Panc1 (cell line): ENCODE measurements at regions of chr12 and their contacts with region 1.

Region 1: GRCh38 chr12:30847259-30847658 is 79.3 kb upstream of the TSPAN11 start:
- DNase-seq: peak; percentile 64
- ATAC-seq: peak; percentile 74
- H3K4me3 ChIP-seq: no peak overlapping the region
- H3K27ac ChIP-seq: no peak overlapping the region
- H3K4me1 ChIP-seq: no peaks in the 10 kb centered on the region
- H3K27me3 ChIP-seq: peaks cover 12% of the 10 kb centered on the region; the same call in 1 of the 2 replicates
- CTCF ChIP-seq: peak; percentile 85

Region 2: DNA sequence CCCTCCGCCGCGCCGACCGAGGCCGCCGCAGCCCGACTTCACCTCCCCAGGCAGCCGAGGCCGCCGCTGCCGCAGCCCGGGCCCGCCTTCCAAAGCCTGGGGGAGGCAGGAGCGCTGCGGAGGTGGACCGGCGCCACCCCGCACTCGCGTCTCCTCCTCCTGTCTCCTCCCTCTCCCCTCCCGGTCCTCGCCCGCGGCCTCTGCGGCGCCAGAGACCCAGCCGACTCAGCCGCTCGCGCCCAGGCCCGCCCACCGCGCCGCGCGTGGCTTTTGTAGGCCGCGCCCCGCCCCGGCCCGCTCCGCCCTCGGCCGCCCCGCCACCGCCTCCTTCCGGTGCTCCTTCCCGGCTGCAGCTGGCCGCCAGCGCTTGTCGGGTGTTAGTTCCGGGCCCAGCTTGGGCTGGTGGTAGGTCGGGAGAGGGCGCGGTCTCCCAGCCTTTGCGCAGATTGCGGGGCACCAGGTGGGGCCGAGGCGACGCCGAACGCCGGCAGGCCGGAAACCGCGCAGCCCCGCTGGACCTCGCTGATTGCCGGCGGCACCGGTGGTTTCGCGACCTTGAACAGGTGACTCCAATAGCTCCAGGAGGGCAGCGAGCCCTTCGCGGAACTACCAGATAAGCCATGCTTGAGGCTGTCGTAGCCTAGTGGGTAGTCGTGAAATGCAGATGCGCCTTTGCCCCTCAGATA is 92.4 kb before region 1 on chr12 and contains the start of gene CAPRIN2:
- CTCF ChIA-PET with region 1: interaction called, 12 read pairs
- POLR2A ChIA-PET with region 1: no interaction called
- in situ Hi-C with region 1: no loop called
- intact Hi-C with region 1: no loop called
- DNase-seq: peak; percentile 83
- ATAC-seq: peak; percentile 98
- H3K4me3 ChIP-seq: peak within 1 kb of the TSS; percentile 88 to 93
- H3K27ac ChIP-seq: peak within 1 kb of the TSS; percentile 98
- H3K4me1 ChIP-seq: peaks cover 35% of the 10 kb centered on the region
- H3K27me3 ChIP-seq: no peaks in the 10 kb centered on the region
- CTCF ChIP-seq: peak; percentile 83
- total RNA-seq, gene CAPRIN2: 28.6 TPM

Region 3: GRCh38 chr12:30985814-30986452 is 138.7 kb after region 1 on chr12:
- CTCF ChIA-PET with region 1: interaction called, 14 read pairs
- POLR2A ChIA-PET with region 1: no interaction called
- in situ Hi-C with region 1: no loop called
- intact Hi-C with region 1: loop called (anchors 1 kb)
- DNase-seq: peak; percentile 30
- ATAC-seq: peak; percentile 90
- H3K4me3 ChIP-seq: no peak overlapping the region
- H3K27ac ChIP-seq: no peak overlapping the region
- H3K4me1 ChIP-seq: no peaks in the 10 kb centered on the region
- H3K27me3 ChIP-seq: no peaks in the 10 kb centered on the region
- CTCF ChIP-seq: peak; percentile 94

Region 4: GRCh38 chr12:31117203-31118011 is 270.1 kb after region 1 on chr12:
- CTCF ChIA-PET with region 1: interaction called, 14 read pairs
- POLR2A ChIA-PET with region 1: no interaction called
- in situ Hi-C with region 1: no loop called
- intact Hi-C with region 1: no loop called
- DNase-seq: peak; percentile 20
- ATAC-seq: peak; percentile 82
- H3K4me3 ChIP-seq: peak overlapping the region; percentile 46 to 74
- H3K27ac ChIP-seq: no peak overlapping the region
- H3K4me1 ChIP-seq: peaks cover 27% of the 10 kb centered on the region
- H3K27me3 ChIP-seq: no peaks in the 10 kb centered on the region; the same call in 1 of the 2 replicates
- CTCF ChIP-seq: peak; percentile 94

Region 5: DNA sequence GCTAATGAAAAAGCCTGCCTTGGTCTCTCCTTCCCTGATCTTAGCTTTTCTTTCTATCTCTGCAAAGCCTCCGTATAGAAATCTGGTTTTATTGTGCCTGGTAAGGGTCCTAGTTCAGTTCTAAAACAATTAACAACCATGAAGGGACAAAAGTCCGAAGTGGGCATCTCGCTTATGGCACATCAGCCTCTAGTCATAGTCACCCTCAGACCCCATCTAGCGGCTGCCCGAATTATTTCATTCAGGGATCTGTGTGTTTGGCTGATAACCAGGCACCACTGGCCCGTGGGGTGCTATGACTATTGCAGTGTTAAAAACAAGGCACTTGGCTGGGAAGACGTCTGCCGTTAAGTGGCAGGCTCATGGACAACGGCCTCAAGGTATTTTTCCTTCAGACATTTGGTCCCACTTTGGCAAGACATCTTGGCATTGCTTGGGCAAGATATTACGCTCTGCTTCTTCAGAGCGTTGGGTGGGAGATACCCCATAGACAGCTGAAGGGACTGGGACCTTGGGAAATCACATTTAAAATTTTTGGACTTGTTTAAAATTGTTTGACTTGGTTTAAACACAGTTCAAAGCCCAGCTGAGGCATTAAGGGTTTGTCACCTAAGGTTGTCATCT is 391.6 kb after region 1 on chr12:
- CTCF ChIA-PET with region 1: interaction called, 4 read pairs
- POLR2A ChIA-PET with region 1: no interaction called
- in situ Hi-C with region 1: no loop called
- intact Hi-C with region 1: loop called (anchors 2 kb)
- DNase-seq: no peak
- ATAC-seq: peak; percentile 90
- H3K4me3 ChIP-seq: no peak overlapping the region
- H3K27ac ChIP-seq: no peak overlapping the region
- H3K4me1 ChIP-seq: no peaks in the 10 kb centered on the region
- H3K27me3 ChIP-seq: peaks cover 29% of the 10 kb centered on the region
- CTCF ChIP-seq: peak; percentile 95